ENCODE measurements at regions of chr18 and their contacts with region 1.

Region 1: DNA sequence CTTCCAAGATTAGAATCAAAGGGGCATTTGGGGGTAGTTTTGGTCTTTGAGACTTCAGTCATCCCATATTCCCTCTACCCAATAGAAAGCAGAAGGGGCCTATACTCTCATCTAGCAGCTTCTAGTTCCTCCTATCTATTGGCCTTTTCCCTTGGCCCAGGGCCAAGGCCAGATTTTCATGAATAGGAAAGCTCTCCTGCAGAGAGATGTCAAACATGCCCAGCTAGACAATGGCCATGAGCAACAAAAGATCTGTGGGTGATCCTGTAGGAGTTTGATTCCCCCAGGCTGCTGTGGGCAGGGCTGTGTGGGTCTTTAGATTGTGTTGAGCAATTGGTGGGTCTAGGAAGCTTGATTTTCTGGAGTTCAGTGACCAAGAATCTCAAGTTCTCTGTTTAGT is 2.9 kb upstream of the ADCYAP1 start:
- DNase-seq: no peak
- ATAC-seq: no peak
- H3K4me3 Mint-ChIP-seq: no peak overlapping the region
- H3K27ac Mint-ChIP-seq: no peak overlapping the region
- H3K4me1 Mint-ChIP-seq: peaks cover under 1% of the 10 kb centered on the region
- H3K27me3 Mint-ChIP-seq: peaks cover 58% of the 10 kb centered on the region
- CTCF ChIP-seq: no peak

Region 2: DNA sequence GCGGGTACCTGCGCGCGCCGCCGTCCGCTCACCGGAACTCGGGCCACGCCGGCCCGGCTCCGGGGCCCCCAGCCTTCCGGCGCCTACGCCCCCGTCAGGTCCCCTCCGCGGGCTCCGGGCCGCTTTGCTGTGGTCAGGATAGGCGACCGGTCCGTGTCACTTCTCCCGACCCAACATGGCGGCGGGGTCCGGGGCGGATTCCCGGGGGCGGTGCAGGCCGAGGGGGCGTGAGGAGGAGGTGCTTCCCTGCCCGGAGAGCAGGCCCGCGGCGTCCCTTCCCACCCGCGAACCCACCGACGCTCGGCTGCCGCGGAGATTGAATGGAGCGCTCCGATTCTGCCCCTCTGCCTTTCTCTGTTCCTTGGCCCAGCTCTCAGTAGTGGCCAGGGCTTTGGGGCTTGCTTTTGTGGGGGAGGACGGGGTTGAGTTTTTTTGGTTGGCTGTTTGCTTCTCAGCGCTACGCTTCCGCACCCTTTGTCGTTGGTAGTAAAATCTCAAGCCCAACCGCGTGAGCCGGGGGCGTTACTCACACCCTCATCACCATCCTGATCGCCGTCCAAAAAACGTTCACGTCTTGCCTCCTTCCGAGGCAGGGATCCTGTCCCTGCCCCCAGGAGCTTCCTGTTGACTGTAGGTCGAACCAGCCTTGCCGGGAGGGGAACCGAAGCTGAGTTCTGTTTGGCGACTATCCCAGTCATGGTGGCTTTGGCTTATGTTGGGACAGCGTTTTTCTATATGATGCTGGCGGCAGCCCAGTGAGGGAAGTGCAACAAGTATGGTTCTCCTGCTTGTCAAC is 89.2 kb before region 1 on chr18:
- CTCF ChIA-PET with region 1: no interaction called
- POLR2A ChIA-PET with region 1: no interaction called
- intact Hi-C with region 1: no loop called
- DNase-seq: peak; percentile 26
- ATAC-seq: peak; percentile 59
- H3K4me3 Mint-ChIP-seq: peak overlapping the region; percentile 80
- H3K27ac Mint-ChIP-seq: peak overlapping the region; percentile 76
- H3K4me1 Mint-ChIP-seq: peaks cover 19% of the 10 kb centered on the region
- H3K27me3 Mint-ChIP-seq: peaks cover 60% of the 10 kb centered on the region
- CTCF ChIP-seq: no peak

Region 3: GRCh38 chr18:864872-865273 is 36.9 kb before region 1 on chr18:
- CTCF ChIA-PET with region 1: no interaction called
- POLR2A ChIA-PET with region 1: no interaction called
- intact Hi-C with region 1: loop called (anchors 1 kb)
- DNase-seq: no peak
- ATAC-seq: no peak
- H3K4me3 Mint-ChIP-seq: no peak overlapping the region
- H3K27ac Mint-ChIP-seq: no peak overlapping the region
- H3K4me1 Mint-ChIP-seq: peaks cover 6% of the 10 kb centered on the region
- H3K27me3 Mint-ChIP-seq: peaks cover 20% of the 10 kb centered on the region
- CTCF ChIP-seq: no peak

Region 4: GRCh38 chr18:1020731-1021344 is 119.1 kb after region 1 on chr18:
- CTCF ChIA-PET with region 1: no interaction called
- POLR2A ChIA-PET with region 1: no interaction called
- intact Hi-C with region 1: no loop called
- DNase-seq: no peak
- ATAC-seq: no peak
- H3K4me3 Mint-ChIP-seq: no peak overlapping the region
- H3K27ac Mint-ChIP-seq: no peak overlapping the region
- H3K4me1 Mint-ChIP-seq: no peaks in the 10 kb centered on the region
- H3K27me3 Mint-ChIP-seq: no peaks in the 10 kb centered on the region
- CTCF ChIP-seq: no peak